ENCODE measurements at regions of chr7 and their contacts with region 1.

Region 1: GRCh38 chr7:9752033-9752432 is 1221.6 kb upstream of the PHF14 start:
- DNase-seq: no peak
- ATAC-seq: no peak
- H3K4me3 ChIP-seq: no peak overlapping the region
- H3K4me3 Mint-ChIP-seq: no peak overlapping the region
- H3K27ac ChIP-seq: no peak overlapping the region
- H3K27ac Mint-ChIP-seq: no peak overlapping the region
- H3K4me1 ChIP-seq: no peaks in the 10 kb centered on the region
- H3K4me1 Mint-ChIP-seq: no peaks in the 10 kb centered on the region
- H3K27me3 ChIP-seq: no peaks in the 10 kb centered on the region
- H3K27me3 Mint-ChIP-seq: no peaks in the 10 kb centered on the region
- CTCF ChIP-seq: no peak

Region 2: DNA sequence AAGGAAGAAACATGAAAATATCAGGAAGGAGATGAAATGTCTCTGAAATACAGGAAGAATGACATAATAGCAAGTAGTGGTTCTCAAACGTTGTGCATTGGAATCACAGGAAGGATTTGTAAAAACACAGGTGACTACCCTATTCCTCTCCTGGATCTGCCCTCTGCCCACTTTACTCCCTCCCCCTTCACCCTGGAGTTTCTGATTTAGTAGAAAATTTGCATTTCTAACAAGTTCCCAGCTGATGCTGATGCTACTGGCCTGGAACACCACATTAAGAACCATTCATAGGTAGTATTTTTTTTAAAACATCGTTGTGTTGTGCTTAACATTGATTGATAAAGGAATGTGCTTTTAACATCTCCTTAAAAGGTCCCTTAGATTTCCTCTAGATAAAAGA is 1352.5 kb after region 1 on chr7:
- CTCF ChIA-PET with region 1: no interaction called
- POLR2A ChIA-PET with region 1: no interaction called
- intact Hi-C with region 1: loop called in 1 of 2 experiments (anchors 10 kb)
- DNase-seq: no peak
- ATAC-seq: no peak
- H3K4me3 ChIP-seq: no peak overlapping the region
- H3K4me3 Mint-ChIP-seq: no peak overlapping the region
- H3K27ac ChIP-seq: no peak overlapping the region
- H3K27ac Mint-ChIP-seq: no peak overlapping the region
- H3K4me1 ChIP-seq: no peaks in the 10 kb centered on the region
- H3K4me1 Mint-ChIP-seq: no peaks in the 10 kb centered on the region
- H3K27me3 ChIP-seq: no peaks in the 10 kb centered on the region
- H3K27me3 Mint-ChIP-seq: no peaks in the 10 kb centered on the region
- CTCF ChIP-seq: no peak